HCT116 (cell line): ENCODE measurements at regions of chr6 and their contacts with region 1.

Region 1: DNA sequence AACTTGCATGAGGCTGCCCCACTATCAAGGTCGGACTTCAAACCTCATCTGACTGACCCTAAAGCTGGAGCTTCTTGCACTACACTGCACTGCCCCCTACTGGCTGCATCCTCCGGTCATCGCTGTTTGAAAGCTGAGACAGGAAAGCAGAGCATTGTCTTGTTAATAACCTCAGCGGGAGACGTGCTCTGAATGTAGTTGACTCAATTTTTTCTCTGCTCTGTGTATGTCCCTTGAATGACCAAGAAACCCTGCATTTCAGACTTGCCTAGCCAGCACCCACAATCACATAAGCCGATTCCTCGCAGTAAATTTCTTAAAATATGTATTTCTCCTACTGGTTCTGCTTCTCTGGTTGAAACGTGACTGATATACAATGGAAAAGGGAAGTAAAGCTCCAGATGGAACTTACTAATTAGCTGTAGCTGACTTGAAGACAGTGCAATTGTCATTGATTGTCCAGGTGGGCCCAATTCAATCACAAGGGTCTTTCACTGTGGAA is 27.8 kb downstream of the TCF21 start:
- DNase-seq: peak; percentile 85
- ATAC-seq: peak; percentile 89
- H3K4me3 ChIP-seq: peak overlapping the region in 1 of 2 experiments; percentile 31; a peak in 1 of 4 replicates
- H3K27ac ChIP-seq: peak overlapping the region; percentile 41; the same call in 1 of the 2 replicates
- H3K4me1 ChIP-seq: peaks cover 8 to 12% of the 10 kb centered on the region in 2 experiments
- H3K27me3 ChIP-seq: no peaks in the 10 kb centered on the region
- CTCF ChIP-seq: peak; percentile 94 to 96 (median 96)
- POLR2A ChIP-seq: no peak
- RAD21 ChIP-seq: peak; percentile 97

Region 2: DNA sequence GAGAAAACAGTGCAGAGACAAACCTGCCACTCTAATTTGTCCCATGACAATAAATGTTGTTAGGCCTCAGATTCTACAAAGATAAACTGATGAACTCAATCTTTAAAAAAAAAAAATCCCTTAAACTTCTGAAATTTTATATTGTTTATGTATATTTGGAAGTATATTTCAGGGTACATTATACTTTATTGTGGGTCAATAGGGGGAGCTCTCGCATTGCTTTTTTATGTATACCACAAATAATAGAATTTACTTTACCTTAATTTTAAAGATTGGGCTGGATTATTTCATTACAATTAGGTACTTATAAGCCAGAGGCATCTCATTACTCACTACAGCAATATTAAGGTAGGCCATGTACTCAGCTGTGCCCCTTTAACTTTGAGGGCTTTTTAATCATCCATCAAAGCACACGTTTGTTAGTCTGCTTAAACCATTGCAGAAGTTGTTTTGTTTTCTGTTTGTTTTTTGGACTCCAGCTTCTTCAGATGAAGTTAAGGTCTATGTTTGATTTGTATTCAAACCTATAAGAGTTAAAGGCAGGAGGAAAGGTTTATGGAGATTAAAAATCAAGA is 731.8 kb before region 1 on chr6:
- CTCF ChIA-PET with region 1: interaction called, 3 read pairs
- POLR2A ChIA-PET with region 1: no interaction called
- RAD21 ChIA-PET with region 1: no interaction called
- intact Hi-C with region 1: loop called (anchors 5 kb)
- DNase-seq: no peak
- ATAC-seq: peak; percentile 57; the same call in 1 of the 2 replicates
- H3K4me3 ChIP-seq: no peak overlapping the region
- H3K27ac ChIP-seq: no peak overlapping the region
- H3K4me1 ChIP-seq: no peaks in the 10 kb centered on the region
- H3K27me3 ChIP-seq: peaks cover 21% of the 10 kb centered on the region
- CTCF ChIP-seq: peak; percentile 38 to 69 (median 50); a peak in 5 of 6 replicates
- POLR2A ChIP-seq: no peak
- RAD21 ChIP-seq: peak; percentile 58

Region 3: DNA sequence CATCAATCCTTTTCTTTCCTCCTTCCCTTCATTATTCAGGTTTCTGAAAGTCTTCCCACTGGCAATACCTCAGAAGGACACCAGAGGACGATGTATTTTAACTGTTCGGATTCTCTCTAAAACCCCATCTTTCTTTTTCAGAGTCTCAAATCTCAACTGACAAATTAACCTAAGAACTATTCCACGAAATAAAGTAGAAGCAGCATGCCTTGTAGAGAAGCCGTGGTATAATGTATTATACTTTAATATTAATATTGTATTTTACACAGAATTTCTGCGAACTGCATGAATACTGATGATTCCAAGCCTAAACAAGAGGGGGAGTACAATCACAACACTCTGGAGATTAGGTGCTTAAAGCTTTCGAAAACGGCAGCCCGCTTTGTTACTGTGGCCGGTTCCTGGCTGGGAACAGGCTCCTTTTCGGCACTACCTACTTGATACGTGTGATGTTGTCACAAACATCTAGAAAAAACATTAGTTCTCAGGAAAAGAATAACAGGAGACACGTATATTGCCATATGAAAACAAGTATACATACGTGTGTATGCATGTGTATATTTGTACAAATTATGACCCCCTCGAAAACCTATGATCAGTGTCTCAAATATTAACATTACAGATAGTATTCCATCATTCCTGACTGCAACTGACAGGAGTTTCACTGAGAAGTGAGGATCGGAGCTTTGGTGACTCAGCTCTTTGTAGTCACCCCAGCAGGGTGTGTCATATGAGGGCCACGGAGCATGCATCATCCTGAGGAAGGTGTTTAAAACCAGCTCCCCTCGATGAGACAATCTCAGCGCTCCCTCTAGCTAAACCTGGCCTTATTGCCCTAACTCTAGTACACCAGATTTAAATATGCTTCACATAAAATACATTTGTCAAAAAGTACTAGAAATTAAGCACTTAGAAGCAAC is 347.5 kb before region 1 on chr6:
- CTCF ChIA-PET with region 1: interaction called, 193 read pairs
- POLR2A ChIA-PET with region 1: interaction called, 16 read pairs
- RAD21 ChIA-PET with region 1: interaction called, 22 to 30 read pairs
- intact Hi-C with region 1: loop called (anchors 1 kb)
- DNase-seq: peak; percentile 87
- ATAC-seq: peak; percentile 97
- H3K4me3 ChIP-seq: peak overlapping the region; percentile 41 to 55
- H3K27ac ChIP-seq: peak overlapping the region; percentile 76
- H3K4me1 ChIP-seq: peaks cover 4 to 14% of the 10 kb centered on the region in 2 experiments
- H3K27me3 ChIP-seq: no peaks in the 10 kb centered on the region
- CTCF ChIP-seq: peak; percentile 90 to 98 (median 94)
- POLR2A ChIP-seq: no peak
- RAD21 ChIP-seq: peak; percentile 87

Region 4: DNA sequence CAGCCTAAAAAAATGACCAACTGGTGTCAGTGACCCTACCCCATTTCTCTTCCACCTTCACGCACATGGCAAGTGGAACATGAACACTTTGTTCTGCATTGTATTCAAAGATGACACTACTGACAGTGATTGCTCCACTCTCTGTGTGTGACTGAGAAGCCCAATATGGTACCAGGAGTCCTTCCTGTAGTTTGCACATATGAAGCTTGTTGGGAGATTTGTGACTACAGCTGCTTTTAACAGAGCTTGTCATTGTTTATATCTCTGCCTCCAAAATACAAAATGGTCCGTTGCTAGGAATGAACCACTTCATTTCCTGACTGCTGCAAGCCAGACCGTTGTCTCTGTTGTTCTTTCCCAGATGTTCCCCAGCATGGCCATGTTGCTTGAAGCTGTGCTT is 168.1 kb before region 1 on chr6:
- CTCF ChIA-PET with region 1: interaction called, 3 read pairs
- POLR2A ChIA-PET with region 1: no interaction called
- RAD21 ChIA-PET with region 1: interaction called in 1 of 2 experiments, 4 read pairs
- intact Hi-C with region 1: loop called (anchors 5 kb)
- DNase-seq: no peak
- ATAC-seq: no peak
- H3K4me3 ChIP-seq: no peak overlapping the region
- H3K27ac ChIP-seq: no peak overlapping the region
- H3K4me1 ChIP-seq: peaks cover 15 to 29% of the 10 kb centered on the region in 2 experiments
- H3K27me3 ChIP-seq: no peaks in the 10 kb centered on the region
- CTCF ChIP-seq: no peak
- POLR2A ChIP-seq: no peak
- RAD21 ChIP-seq: no peak

Region 5: GRCh38 chr6:134117370-134117807 is 200.7 kb after region 1 on chr6:
- CTCF ChIA-PET with region 1: no interaction called
- POLR2A ChIA-PET with region 1: no interaction called
- RAD21 ChIA-PET with region 1: no interaction called
- intact Hi-C with region 1: no loop called
- DNase-seq: no peak
- ATAC-seq: no peak
- H3K4me3 ChIP-seq: no peak overlapping the region
- H3K27ac ChIP-seq: no peak overlapping the region
- H3K4me1 ChIP-seq: no peaks in the 10 kb centered on the region
- H3K27me3 ChIP-seq: no peaks in the 10 kb centered on the region
- CTCF ChIP-seq: no peak
- POLR2A ChIP-seq: no peak
- RAD21 ChIP-seq: no peak

Region 6: GRCh38 chr6:134138226-134138975 is 221.7 kb after region 1 on chr6:
- CTCF ChIA-PET with region 1: no interaction called
- POLR2A ChIA-PET with region 1: no interaction called
- RAD21 ChIA-PET with region 1: no interaction called
- intact Hi-C with region 1: no loop called
- DNase-seq: no peak
- ATAC-seq: no peak
- H3K4me3 ChIP-seq: no peak overlapping the region
- H3K27ac ChIP-seq: no peak overlapping the region
- H3K4me1 ChIP-seq: no peaks in the 10 kb centered on the region
- H3K27me3 ChIP-seq: no peaks in the 10 kb centered on the region
- CTCF ChIP-seq: no peak
- POLR2A ChIP-seq: no peak
- RAD21 ChIP-seq: no peak